Calu3 (cell line): ENCODE measurements at regions of chr12 and their contacts with region 1.

Region 1: GRCh38 chr12:74415633-74416032 is 122.0 kb upstream of the ATXN7L3B start:
- DNase-seq: peak; percentile 23
- H3K4me3 Mint-ChIP-seq: no peak overlapping the region
- H3K27ac Mint-ChIP-seq: no peak overlapping the region
- H3K4me1 Mint-ChIP-seq: peaks cover 9% of the 10 kb centered on the region
- H3K27me3 Mint-ChIP-seq: no peaks in the 10 kb centered on the region
- CTCF ChIP-seq: no peak

Region 2: DNA sequence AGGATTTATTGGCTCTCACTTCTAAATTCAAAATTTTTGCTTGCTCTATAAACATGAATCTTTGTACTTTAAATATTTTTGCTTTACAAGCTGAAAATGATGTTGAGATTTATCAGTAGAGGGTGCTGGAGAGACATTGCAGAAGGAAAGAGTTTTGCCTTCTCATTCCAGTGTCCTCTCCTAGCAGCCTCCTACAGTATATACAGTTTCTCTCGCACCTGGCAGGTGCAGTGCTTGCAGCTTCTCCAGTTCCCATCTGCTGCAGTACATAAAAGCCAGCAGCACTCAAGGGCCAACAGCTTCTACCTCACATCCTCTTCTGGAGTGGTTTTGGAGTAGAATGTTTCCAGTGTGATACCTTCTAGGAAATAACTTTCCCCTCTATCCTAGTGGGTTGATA is 479.8 kb before region 1 on chr12:
- CTCF ChIA-PET with region 1: interaction called, 6 read pairs
- intact Hi-C with region 1: loop called (anchors 1 kb)
- DNase-seq: peak; percentile 5
- H3K4me3 Mint-ChIP-seq: no peak overlapping the region
- H3K27ac Mint-ChIP-seq: no peak overlapping the region
- H3K4me1 Mint-ChIP-seq: peaks cover 9% of the 10 kb centered on the region
- H3K27me3 Mint-ChIP-seq: no peaks in the 10 kb centered on the region
- CTCF ChIP-seq: peak; percentile 48

Region 3: DNA sequence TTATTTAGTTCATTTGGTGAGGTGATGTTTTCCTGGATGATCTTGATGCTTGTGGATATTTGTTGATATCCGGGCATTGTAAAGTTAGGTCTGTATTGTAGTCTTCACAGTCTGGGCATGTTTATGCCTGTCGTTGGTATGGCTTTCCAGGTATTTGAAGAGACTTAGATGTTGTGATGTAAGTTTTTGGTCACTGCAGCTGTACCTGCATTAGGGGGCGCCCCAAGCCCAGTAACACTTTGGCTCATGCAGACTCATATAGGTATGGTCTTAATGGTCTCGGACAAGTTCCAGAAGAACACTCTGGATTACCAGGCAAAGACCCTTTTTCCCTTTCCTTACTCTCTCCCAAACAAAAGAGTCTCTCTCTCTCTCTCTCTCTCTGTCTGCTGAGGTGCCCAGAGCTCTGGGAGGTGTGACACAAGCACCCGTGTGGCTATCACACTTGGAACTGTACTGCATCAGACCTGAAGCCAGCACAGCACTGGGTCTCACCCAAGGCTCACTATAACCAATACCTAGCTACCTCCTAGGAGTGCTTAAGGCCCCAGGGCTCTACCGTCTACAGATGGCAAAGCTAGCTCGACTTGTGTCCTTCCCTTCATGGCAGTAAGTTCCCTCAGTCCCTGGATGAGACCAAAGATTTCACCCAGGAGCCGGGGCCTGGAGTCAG is 303.8 kb before region 1 on chr12:
- CTCF ChIA-PET with region 1: interaction called, 4 read pairs
- intact Hi-C with region 1: loop called (anchors 1 kb)
- DNase-seq: peak; percentile 66
- H3K4me3 Mint-ChIP-seq: no peak overlapping the region
- H3K27ac Mint-ChIP-seq: no peak overlapping the region
- H3K4me1 Mint-ChIP-seq: no peaks in the 10 kb centered on the region
- H3K27me3 Mint-ChIP-seq: no peaks in the 10 kb centered on the region
- CTCF ChIP-seq: peak; percentile 43

Region 4: GRCh38 chr12:74144396-74144795 is 271.2 kb before region 1 on chr12:
- CTCF ChIA-PET with region 1: no interaction called
- intact Hi-C with region 1: no loop called
- DNase-seq: no peak
- H3K4me3 Mint-ChIP-seq: no peak overlapping the region
- H3K27ac Mint-ChIP-seq: no peak overlapping the region
- H3K4me1 Mint-ChIP-seq: no peaks in the 10 kb centered on the region
- H3K27me3 Mint-ChIP-seq: no peaks in the 10 kb centered on the region
- CTCF ChIP-seq: no peak

Region 5: GRCh38 chr12:74337951-74338350 is 77.7 kb before region 1 on chr12:
- CTCF ChIA-PET with region 1: interaction called, 3 read pairs
- intact Hi-C with region 1: loop called (anchors 5 kb)
- DNase-seq: peak; percentile 24
- H3K4me3 Mint-ChIP-seq: no peak overlapping the region
- H3K27ac Mint-ChIP-seq: peak overlapping the region; percentile 43
- H3K4me1 Mint-ChIP-seq: peaks cover 41% of the 10 kb centered on the region
- H3K27me3 Mint-ChIP-seq: no peaks in the 10 kb centered on the region
- CTCF ChIP-seq: no peak

Region 6: DNA sequence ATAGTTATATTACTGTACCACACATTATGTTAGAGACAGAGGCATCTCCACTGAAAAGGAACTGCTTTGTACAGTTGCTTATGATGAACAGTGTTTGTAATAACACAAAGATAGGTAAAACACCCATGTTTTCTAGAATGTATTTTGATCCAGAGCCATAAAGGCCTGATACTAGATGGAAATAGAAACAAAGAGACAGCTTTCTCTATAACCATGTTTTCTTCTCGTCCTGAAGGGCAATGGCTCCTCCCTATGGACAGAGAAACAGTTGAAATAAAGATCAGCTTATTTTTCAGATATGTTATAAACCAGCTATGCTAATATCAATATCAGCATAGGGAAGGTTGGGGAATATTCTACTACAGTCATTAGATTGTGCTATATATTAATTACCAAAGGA is 231.2 kb after region 1 on chr12:
- CTCF ChIA-PET with region 1: interaction called, 25 read pairs
- intact Hi-C with region 1: loop called (anchors 2 kb)
- DNase-seq: peak; percentile 58
- H3K4me3 Mint-ChIP-seq: no peak overlapping the region
- H3K27ac Mint-ChIP-seq: no peak overlapping the region
- H3K4me1 Mint-ChIP-seq: no peaks in the 10 kb centered on the region
- H3K27me3 Mint-ChIP-seq: no peaks in the 10 kb centered on the region
- CTCF ChIP-seq: no peak